Activated CD8-positive, alpha-beta T cell treated with anti-CD3 and anti-CD28 coated beads for 36 hours (primary cell): ENCODE measurements at regions of chr14 and their contacts with region 1.

Region 1: GRCh38 chr14:38187589-38188018 is 20.1 kb upstream of the SSTR1 start:
- DNase-seq: no peak
- ATAC-seq: no peak
- H3K4me3 Mint-ChIP-seq: no peak overlapping the region
- H3K27ac Mint-ChIP-seq: no peak overlapping the region
- H3K4me1 Mint-ChIP-seq: peaks cover 7% of the 10 kb centered on the region
- H3K27me3 Mint-ChIP-seq: no peaks in the 10 kb centered on the region
- CTCF ChIP-seq: no peak

Region 2: GRCh38 chr14:37903343-37904191 is 284.0 kb before region 1 on chr14:
- CTCF ChIA-PET with region 1: no interaction called
- POLR2A ChIA-PET with region 1: no interaction called
- intact Hi-C with region 1: loop called (anchors 10 kb)
- DNase-seq: peak; percentile 17
- ATAC-seq: no peak
- H3K4me3 Mint-ChIP-seq: no peak overlapping the region
- H3K27ac Mint-ChIP-seq: no peak overlapping the region
- H3K4me1 Mint-ChIP-seq: no peaks in the 10 kb centered on the region
- H3K27me3 Mint-ChIP-seq: peaks cover 9% of the 10 kb centered on the region
- CTCF ChIP-seq: peak; percentile 73